ENCODE measurements at regions of chr9 and their contacts with region 1.

Region 1: DNA sequence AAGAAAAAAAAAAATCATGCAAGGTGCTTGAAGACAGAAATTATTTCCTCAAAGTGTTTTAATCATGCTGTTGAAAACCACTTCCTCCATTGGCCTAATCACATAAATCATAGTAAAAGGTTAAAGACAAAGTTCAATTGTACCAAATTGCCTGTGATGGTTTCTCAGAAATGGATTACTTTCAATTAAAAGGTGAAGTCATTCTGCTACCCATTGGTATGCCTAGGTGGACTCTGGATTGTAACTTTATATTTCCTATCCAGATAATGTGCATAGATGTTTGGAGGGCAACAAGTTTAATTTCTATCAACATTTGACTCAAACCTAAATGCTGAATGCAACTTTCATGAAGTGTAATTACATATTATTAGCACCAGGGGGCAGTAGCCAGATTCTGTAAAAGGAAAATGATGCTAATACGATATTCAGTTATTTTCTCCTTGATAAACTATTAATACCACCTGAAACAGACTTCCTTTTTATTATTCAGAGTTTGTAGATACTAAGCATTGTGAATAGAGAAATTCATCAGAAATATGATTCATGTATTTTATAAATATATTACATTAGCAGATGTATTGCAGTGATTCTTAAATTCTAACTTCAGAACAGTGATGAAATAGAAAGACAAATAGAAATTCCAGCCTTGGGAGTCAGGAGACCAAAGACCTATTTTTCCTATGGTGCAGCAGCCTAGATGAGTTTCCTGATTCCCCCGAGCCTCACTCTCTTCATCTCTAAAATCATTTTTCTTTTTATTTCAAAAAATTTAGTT is 148.2 kb downstream of the CAAP1 start:
- DNase-seq: peak; percentile 38
- ATAC-seq: no peak
- H3K4me3 ChIP-seq: no peak overlapping the region
- H3K27ac ChIP-seq: no peak overlapping the region
- H3K4me1 ChIP-seq: peaks cover 9% of the 10 kb centered on the region
- H3K27me3 ChIP-seq: no peaks in the 10 kb centered on the region
- CTCF ChIP-seq: peak; percentile 72

Region 2: DNA sequence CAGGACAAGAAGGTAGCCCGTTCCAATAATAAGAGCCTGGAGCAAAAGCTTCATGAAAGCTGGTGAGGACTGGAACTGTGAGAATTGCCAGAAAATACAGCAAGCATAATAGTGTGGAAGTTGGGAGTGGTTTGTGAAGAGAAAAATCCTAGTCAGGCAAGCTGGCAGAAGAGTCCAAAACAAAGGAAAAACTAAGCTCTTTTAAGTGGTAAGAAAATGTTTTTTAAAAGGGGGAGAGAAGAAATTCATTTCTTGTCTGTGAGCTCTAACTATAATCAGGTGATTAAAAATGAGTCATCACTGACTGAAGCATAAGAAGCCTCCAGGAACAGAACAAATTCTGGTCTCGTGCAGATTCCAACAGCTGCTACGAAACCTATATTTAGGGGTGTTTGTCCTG is 45.6 kb after region 1 on chr9:
- CTCF ChIA-PET with region 1: no interaction called
- POLR2A ChIA-PET with region 1: no interaction called
- intact Hi-C with region 1: loop called (anchors 10 kb)
- DNase-seq: peak; percentile 3
- ATAC-seq: peak; percentile 56
- H3K4me3 ChIP-seq: no peak overlapping the region
- H3K27ac ChIP-seq: no peak overlapping the region
- H3K4me1 ChIP-seq: peaks cover 6% of the 10 kb centered on the region; the same call in 1 of the 2 replicates
- H3K27me3 ChIP-seq: no peaks in the 10 kb centered on the region
- CTCF ChIP-seq: no peak

Region 3: DNA sequence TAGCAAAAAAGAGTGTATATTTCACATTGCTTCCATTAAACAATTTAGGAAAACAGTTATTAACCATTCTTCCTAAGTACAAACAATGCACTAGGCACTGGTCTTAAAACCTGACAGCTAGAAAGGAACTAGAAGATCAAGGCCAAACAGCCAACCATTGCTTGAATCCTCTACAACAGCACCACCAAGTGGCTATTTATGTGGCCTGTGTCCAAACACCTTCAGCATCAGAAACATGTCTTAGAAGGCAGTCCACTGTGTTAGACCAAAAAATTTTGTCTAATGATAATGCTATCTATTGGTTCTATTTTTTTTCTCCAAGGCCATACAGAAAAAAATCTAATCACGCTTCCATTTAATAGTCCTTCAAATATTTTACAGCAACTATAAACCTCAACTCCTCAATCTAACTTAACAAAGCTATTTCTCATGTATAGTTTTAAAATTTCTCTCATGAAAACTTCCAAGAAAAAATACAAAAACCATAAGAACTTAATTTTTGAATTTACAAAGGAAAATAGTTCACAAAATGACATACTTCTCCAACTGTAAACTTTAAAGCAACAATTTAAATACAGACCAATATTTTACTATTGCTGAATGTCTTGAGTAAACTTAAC is 112.1 kb after region 1 on chr9:
- CTCF ChIA-PET with region 1: no interaction called
- POLR2A ChIA-PET with region 1: no interaction called
- intact Hi-C with region 1: loop called (anchors 1 kb)
- DNase-seq: peak; percentile 69
- ATAC-seq: peak; percentile 55
- H3K4me3 ChIP-seq: no peak overlapping the region
- H3K27ac ChIP-seq: no peak overlapping the region
- H3K4me1 ChIP-seq: no peaks in the 10 kb centered on the region
- H3K27me3 ChIP-seq: no peaks in the 10 kb centered on the region
- CTCF ChIP-seq: peak; percentile 75

Region 4: GRCh38 chr9:26975693-26976059 is 231.3 kb after region 1 on chr9:
- CTCF ChIA-PET with region 1: no interaction called
- POLR2A ChIA-PET with region 1: no interaction called
- intact Hi-C with region 1: loop called (anchors 10 kb)
- DNase-seq: peak; percentile 47
- ATAC-seq: no peak; the same call in 1 of the 2 replicates
- H3K4me3 ChIP-seq: no peak overlapping the region
- H3K27ac ChIP-seq: no peak overlapping the region
- H3K4me1 ChIP-seq: no peaks in the 10 kb centered on the region
- H3K27me3 ChIP-seq: no peaks in the 10 kb centered on the region
- CTCF ChIP-seq: peak; percentile 56

Region 5: GRCh38 chr9:27529316-27530278 is 785.2 kb after region 1 on chr9 and contains the start of gene MOB3B:
- CTCF ChIA-PET with region 1: no interaction called
- POLR2A ChIA-PET with region 1: no interaction called
- intact Hi-C with region 1: no loop called
- DNase-seq: peak; percentile 71
- ATAC-seq: peak; percentile 93
- H3K4me3 ChIP-seq: peak within 1 kb of the TSS; percentile 82
- H3K27ac ChIP-seq: no peak within 1 kb of the TSS
- H3K4me1 ChIP-seq: peaks cover 6% of the 10 kb centered on the region; the same call in 1 of the 2 replicates
- H3K27me3 ChIP-seq: no peaks in the 10 kb centered on the region
- CTCF ChIP-seq: peak; percentile 76
- total RNA-seq, gene MOB3B: 2.6 TPM in 2 replicates

Measured in PC-3 (cell line).